ENCODE measurements at regions of chr7 and their contacts with region 1.

Region 1: DNA sequence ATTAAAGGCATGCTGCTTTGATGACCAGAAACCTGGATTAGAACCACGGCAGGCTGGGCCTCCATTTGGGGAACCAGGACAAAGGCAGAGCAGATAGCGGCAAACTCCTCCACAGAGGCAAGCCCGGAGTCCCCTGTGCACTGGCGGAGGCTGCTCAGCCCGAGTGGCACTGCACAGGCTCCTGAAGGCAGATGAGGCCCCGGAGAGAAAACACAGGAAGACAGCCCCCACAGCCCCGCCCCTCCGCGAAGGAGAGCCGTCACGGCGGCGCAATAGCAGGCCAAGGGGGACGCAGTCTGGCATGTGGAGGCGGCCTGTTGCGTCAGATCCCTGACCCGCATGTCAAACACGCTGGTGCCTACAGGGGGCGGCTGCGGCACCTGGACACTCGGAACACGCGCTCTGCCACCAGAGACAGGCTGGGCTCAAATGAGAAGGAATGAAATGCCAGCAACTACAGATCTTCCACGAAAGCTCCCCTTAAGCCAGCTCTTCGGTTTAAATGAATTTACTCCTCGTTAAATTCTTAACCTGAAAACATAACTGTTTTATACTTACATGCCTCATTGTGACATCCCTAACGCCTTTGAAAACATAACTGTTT is 128.5 kb downstream of the MAD1L1 start:
- DNase-seq: peak; percentile 88
- H3K4me3 Mint-ChIP-seq: peak overlapping the region; percentile 56
- H3K27ac Mint-ChIP-seq: peak overlapping the region; percentile 74
- H3K4me1 Mint-ChIP-seq: peaks cover 39% of the 10 kb centered on the region
- H3K27me3 Mint-ChIP-seq: no peaks in the 10 kb centered on the region

Region 2: DNA sequence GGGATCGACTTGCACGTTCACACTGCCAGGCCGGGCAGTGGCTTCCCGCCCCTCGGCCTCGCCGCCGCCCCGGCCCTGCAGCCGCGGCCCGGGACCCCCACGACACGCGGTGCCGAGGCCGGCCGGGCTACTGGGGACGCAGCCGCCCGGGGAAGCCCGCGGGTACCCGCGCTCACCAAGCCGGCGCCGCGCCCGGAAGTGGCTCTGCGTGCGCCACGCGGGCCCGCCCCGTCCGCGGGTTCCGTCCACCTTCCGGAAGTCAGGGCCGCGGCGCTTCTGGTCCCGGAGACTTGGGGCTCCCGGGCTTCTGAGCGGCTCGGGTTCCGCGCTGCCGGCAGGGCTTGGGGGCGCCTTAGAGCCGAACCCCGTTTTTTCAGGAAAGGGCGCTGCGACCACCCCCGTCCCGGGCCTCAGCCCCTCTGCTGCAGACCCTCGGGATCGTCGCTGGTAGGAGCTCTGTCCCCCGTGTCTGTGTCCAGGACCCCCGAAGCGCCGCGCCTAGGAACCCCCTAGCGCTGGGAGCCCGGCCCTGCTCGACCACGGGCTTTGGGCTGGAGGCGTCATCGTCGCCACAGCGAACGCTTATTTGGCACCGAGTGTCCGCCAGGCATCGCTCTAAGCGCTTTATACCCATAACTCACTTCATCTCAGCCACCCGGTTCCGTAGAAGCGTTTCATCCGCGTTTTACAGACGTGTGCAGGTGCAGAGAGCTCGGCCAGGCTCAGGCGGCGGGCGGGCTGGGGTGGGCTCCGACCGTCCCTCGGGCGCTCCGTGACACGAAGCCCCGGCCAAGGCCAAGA is 534.2 kb before region 1 on chr7 and contains the start of gene PSMG3:
- CTCF ChIA-PET with region 1: no interaction called
- intact Hi-C with region 1: loop called (anchors 5 kb)
- DNase-seq: peak; percentile 91
- H3K4me3 Mint-ChIP-seq: peak within 1 kb of the TSS; percentile 87
- H3K27ac Mint-ChIP-seq: peak within 1 kb of the TSS; percentile 87
- H3K4me1 Mint-ChIP-seq: peaks cover 37% of the 10 kb centered on the region
- H3K27me3 Mint-ChIP-seq: no peaks in the 10 kb centered on the region
- total RNA-seq, gene PSMG3: 29.8 to 33.9 TPM

Region 3: DNA sequence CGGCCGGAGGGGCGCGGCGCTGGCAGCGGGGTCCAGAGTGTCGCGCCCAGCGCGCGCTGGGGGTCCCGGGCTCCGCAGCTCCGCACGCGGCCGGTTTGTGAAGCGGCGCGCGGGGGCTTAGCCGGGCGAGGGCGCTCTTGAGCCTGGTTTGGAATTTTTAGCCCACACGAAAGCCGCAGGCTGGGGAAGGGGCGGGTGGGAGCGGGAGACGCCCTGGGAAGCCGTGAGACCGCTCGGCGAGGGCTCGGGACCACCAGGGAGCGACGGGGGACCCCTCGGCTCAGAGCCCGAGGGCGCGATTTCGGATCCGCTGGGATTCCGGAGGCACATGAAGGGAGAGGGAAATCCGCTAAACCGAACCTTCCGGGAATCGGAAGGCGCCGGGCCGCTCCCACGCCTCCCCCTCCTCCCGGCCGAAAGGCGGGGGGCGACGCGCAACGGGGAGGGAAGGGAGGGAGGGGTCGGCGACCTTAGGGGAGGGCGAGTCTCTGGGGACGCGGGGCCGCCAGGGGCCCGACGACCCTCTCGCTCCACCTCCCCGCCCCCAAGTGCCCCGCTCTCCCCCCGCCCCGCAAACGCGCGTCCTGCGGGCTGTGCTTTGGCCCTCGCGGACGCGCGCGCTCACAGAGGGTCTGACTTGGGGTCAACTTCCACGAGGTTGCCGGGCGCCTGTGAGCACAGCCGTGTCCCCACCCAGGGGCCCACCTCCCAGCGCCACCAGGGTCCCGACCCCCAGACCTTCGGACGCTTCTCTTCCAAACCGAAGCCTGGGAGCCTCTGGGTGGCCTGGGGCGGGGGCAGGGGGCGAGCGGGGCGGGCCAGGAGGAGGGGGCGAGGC is 439.3 kb before region 1 on chr7:
- CTCF ChIA-PET with region 1: no interaction called
- intact Hi-C with region 1: loop called (anchors 5 kb)
- DNase-seq: peak; percentile 74
- H3K4me3 Mint-ChIP-seq: peak overlapping the region; percentile 15
- H3K27ac Mint-ChIP-seq: no peak overlapping the region
- H3K4me1 Mint-ChIP-seq: peaks cover 13% of the 10 kb centered on the region
- H3K27me3 Mint-ChIP-seq: peaks cover 44% of the 10 kb centered on the region

Region 4: DNA sequence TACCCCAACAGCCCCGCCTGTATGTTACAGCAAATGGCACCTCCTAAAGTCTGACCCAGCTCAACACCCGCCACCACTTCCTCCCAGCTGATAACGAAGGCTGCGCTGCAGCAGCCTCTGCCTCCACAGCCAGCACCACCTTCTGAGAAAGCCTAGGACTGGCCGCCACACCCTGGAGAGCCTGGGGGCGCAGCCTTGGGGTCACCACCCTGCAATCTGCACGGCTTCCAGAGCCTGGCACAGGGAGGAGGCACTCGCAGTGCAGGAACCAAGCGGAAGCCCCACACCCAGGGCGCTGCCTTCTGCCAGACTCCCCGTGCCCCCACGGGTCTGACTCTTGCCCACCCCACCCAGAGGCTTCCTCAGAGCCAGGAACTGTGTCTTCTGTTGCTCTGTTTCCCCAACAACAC is 16.0 kb after region 1 on chr7:
- CTCF ChIA-PET with region 1: interaction called, 4 read pairs
- intact Hi-C with region 1: loop called (anchors 1 kb)
- DNase-seq: peak; percentile 54
- H3K4me3 Mint-ChIP-seq: no peak overlapping the region
- H3K27ac Mint-ChIP-seq: no peak overlapping the region
- H3K4me1 Mint-ChIP-seq: peaks cover 12% of the 10 kb centered on the region
- H3K27me3 Mint-ChIP-seq: no peaks in the 10 kb centered on the region

Region 5: DNA sequence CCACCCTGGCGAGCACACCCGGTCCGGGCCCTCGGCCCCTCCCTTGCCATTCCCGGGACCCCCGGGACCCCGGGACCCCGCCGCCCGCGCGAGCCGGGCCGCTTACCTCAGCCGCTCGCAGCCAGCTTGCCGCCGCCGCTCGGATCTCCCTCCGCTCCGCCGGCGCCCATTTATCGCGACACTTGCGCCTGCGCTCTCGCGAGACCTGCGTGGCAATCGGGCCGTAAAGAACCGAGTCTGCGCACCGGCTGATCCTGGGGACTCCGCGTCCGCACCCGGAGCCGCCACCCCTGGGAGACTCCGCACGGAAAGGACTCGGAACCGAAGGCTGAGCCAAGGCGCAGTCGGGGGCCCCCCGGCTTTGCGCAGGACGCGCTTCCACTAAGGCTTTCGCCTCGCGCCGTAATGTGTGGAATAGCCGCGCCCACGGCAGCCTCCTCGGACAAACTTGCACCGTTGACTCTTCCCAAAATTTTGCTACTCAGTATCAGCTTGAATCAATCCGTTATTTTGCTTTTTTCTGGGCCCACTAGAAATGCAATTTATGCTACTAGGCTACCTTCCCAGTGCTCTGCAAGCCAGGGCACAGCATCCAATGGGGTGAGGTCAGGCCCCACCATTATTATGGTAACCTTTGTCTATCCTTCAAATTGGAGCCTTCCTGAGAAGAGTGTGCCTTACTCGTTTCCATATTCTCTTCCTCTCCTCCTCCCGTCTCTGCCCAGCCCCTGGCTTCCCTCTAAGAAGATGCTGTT is 128.7 kb after region 1 on chr7 and contains the start of gene MAD1L1:
- CTCF ChIA-PET with region 1: no interaction called
- intact Hi-C with region 1: loop called (anchors 5 kb)
- DNase-seq: peak; percentile 93
- H3K4me3 Mint-ChIP-seq: peak within 1 kb of the TSS; percentile 88
- H3K27ac Mint-ChIP-seq: peak within 1 kb of the TSS; percentile 46
- H3K4me1 Mint-ChIP-seq: peaks cover 32% of the 10 kb centered on the region
- H3K27me3 Mint-ChIP-seq: no peaks in the 10 kb centered on the region
- total RNA-seq, gene MAD1L1: 37.5 to 40.2 TPM

Measured in activated naive CD4-positive, alpha-beta T cell treated with anti-CD3 and anti-CD28 coated beads for 36 hours (primary cell).